ENCODE measurements at regions of chr10 and their contacts with region 1.

Region 1: GRCh38 chr10:102225646-102226541 is at the start of gene ELOVL3:
- DNase-seq: peak; percentile 73
- H3K4me3 ChIP-seq: peak within 1 kb of the TSS; percentile 14; the same call in 1 of the 2 replicates
- H3K27me3 ChIP-seq: peaks cover 25% of the 10 kb centered on the region
- CTCF ChIP-seq: no peak
- polyA plus RNA-seq, gene ELOVL3: 0.34 and 0.43 TPM in 2 replicates

Region 2: GRCh38 chr10:102245101-102245931 is 19.4 kb after region 1 on chr10 and contains the start of gene GBF1:
- CTCF ChIA-PET with region 1: interaction called, 31 read pairs
- POLR2A ChIA-PET with region 1: interaction called, 3 read pairs
- DNase-seq: peak; percentile 100
- H3K4me3 ChIP-seq: peak within 1 kb of the TSS; percentile 96
- H3K27me3 ChIP-seq: peaks cover 5% of the 10 kb centered on the region
- CTCF ChIP-seq: no peak
- polyA plus RNA-seq, gene GBF1: 19.0 and 28.4 TPM in 2 replicates

Region 3: DNA sequence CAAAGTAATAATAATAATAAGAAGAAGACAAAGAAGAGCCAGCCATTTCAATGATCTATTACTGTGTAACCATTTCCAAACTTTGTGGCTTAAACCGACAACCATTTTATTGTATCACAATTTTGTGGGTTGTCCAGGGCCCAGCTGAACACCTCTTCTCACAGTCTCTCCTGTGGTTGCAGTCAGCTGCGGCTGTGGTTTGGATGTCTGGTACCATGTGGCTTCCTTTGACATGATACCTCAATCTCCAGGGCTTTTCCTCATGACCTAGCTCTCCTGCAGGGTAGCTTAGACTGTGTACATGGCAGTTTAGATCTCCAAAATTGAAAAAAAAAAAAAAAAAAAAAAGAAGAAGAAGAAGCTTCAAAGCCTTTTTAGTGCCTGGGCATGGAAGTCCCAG is 97.0 kb after region 1 on chr10:
- CTCF ChIA-PET with region 1: interaction called, 14 read pairs
- POLR2A ChIA-PET with region 1: no interaction called
- DNase-seq: no peak
- H3K4me3 ChIP-seq: no peak overlapping the region
- H3K27me3 ChIP-seq: no peaks in the 10 kb centered on the region
- CTCF ChIP-seq: no peak

Region 4: DNA sequence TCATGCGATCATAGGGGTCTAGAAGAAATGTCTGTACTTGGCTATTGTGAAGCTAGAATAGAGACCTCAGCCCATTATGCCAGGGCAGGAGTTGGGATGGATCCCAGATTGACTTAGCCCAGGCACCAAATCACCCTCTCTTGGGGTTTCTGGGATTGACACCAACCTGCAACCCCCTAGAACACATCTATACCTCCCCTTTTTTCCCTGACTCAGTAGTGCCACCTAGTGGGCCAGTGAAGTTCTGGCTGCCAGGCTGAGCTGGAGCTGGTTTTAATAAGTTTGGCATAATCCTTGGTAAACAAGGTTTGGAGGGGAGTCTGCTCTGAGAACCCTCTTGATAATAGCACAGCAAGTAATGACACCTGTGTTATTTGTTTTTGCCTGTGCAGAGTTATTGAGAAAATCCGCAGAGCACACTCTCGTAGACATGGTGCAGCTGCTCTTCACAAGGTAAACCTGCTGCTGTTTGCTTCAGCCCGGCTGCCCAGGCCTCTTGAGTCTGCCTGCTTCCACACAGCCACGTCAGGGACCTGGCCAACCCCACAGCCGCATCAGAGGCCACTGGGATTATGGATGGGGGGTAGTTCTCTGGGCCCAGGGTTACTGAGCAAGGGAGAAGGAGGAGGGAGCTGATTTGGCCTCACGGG is 126.3 kb after region 1 on chr10:
- CTCF ChIA-PET with region 1: interaction called, 658 read pairs
- POLR2A ChIA-PET with region 1: no interaction called
- DNase-seq: no peak
- H3K4me3 ChIP-seq: no peak overlapping the region
- H3K27me3 ChIP-seq: no peaks in the 10 kb centered on the region
- CTCF ChIP-seq: peak; percentile 90

Region 5: DNA sequence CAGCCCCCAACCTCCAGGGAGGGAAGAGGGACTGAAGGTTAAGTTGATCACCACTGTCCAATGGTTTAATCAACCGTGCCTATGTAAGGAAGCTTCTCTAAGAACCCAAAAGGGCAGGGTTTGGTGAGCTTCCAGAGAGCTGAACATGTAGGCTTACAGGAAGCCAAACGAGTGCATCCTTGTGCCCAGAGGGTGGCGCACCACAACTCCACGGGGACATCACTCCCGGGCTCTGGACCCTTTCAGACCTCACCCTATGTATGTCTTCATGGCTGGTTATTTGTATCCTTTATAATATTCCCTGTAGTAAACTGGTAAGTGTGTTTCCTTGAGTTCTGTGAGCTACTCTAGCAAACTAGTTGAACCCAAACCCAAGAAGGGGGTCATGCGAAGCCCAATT is 158.2 kb after region 1 on chr10:
- CTCF ChIA-PET with region 1: interaction called, 91 read pairs
- POLR2A ChIA-PET with region 1: no interaction called
- DNase-seq: no peak
- H3K4me3 ChIP-seq: no peak overlapping the region
- H3K27me3 ChIP-seq: no peaks in the 10 kb centered on the region
- CTCF ChIP-seq: peak; percentile 30; the same call in 1 of the 2 replicates

Region 6: GRCh38 chr10:102399217-102400089 is 173.6 kb after region 1 on chr10:
- CTCF ChIA-PET with region 1: interaction called, 222 read pairs
- POLR2A ChIA-PET with region 1: interaction called, 3 read pairs
- DNase-seq: no peak
- H3K4me3 ChIP-seq: peak overlapping the region; percentile 48
- H3K27me3 ChIP-seq: no peaks in the 10 kb centered on the region
- CTCF ChIP-seq: peak; percentile 86

Region 7: GRCh38 chr10:102476466-102477141 is 250.7 kb after region 1 on chr10:
- CTCF ChIA-PET with region 1: interaction called, 17 read pairs
- POLR2A ChIA-PET with region 1: no interaction called
- DNase-seq: no peak
- H3K4me3 ChIP-seq: no peak overlapping the region
- H3K27me3 ChIP-seq: no peaks in the 10 kb centered on the region
- CTCF ChIP-seq: no peak

Measured in BJ (cell line).